ENCODE measurements at regions of chr12 and their contacts with region 1.

Region 1: GRCh38 chr12:64571411-64571810 is 38.9 kb upstream of the RASSF3 start:
- DNase-seq: peak; percentile 27
- H3K4me3 ChIP-seq: no peak overlapping the region
- H3K27ac ChIP-seq: no peak overlapping the region
- H3K4me1 ChIP-seq: no peaks in the 10 kb centered on the region
- CTCF ChIP-seq: no peak

Region 2: GRCh38 chr12:64583771-64584421 is 12.5 kb after region 1 on chr12:
- CTCF ChIA-PET with region 1: no interaction called
- POLR2A ChIA-PET with region 1: interaction called, 13 read pairs
- intact Hi-C with region 1: no loop called
- DNase-seq: peak; percentile 61
- H3K4me3 ChIP-seq: no peak overlapping the region
- H3K27ac ChIP-seq: peak overlapping the region; percentile 21
- H3K4me1 ChIP-seq: peaks cover 14% of the 10 kb centered on the region
- CTCF ChIP-seq: no peak

Region 3: DNA sequence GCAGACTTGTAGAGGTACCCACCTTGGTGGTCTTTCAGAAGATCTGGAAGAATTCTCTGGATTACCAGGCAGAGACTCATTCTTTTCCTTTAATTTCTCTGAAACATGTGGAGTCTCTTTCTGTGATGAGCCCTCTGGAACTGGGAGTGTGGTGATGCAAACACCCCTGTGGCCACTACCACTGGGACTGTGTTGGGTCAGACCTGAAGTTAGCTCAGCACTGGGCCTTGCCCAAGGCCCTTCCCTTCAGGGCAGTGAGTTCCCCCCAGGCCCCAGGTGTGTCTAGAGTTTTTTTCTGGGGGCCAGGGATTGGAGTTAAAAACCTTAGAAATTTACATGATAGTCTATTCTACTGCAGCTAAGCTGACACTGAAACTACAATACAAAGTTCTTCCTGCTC is 285.0 kb after region 1 on chr12:
- CTCF ChIA-PET with region 1: no interaction called
- POLR2A ChIA-PET with region 1: no interaction called
- intact Hi-C with region 1: no loop called
- DNase-seq: no peak
- H3K4me3 ChIP-seq: no peak overlapping the region
- H3K27ac ChIP-seq: no peak overlapping the region
- H3K4me1 ChIP-seq: no peaks in the 10 kb centered on the region
- CTCF ChIP-seq: no peak

Measured in OCI-LY7 (cell line).